AG04449 (cell line): ENCODE measurements at regions of chr5 and their contacts with region 1.

Region 1: GRCh38 chr5:42889311-42889933 is 77.7 kb upstream of the SELENOP start:
- DNase-seq: no peak
- H3K4me3 ChIP-seq: no peak overlapping the region
- CTCF ChIP-seq: peak; percentile 84

Region 2: DNA sequence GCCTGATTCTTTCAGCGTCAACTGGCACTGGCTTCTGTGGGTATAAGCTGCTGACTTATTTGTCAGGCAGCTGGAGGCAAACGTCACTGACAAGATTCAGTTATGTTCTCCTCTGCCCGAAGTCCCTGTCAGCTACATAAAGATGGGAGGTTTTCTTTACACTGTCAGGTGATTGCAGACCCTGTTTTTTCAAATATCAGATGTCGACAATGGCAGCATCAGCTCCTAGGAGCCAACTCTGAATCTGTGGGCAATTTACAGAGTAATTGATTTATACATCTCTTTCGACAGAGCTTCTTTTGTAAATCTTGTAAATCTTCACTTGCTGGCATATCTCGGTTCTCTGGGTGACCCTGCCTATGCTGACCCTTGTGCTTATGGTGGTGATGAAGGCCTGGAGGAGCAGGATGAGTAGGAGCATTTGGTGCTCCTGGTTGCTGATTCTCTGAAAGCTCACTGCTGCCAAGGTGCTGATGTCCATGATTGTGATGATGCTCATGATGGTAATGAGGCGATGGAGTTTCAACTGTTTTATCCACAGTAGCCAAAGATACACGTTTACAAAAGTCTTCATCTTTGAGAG is 88.6 kb before region 1 on chr5:
- CTCF ChIA-PET with region 1: no interaction called
- POLR2A ChIA-PET with region 1: no interaction called
- DNase-seq: no peak
- H3K4me3 ChIP-seq: no peak overlapping the region
- CTCF ChIP-seq: no peak

Region 3: GRCh38 chr5:42876375-42876844 is 13.0 kb before region 1 on chr5:
- CTCF ChIA-PET with region 1: interaction called, 18 read pairs
- POLR2A ChIA-PET with region 1: no interaction called
- DNase-seq: no peak
- H3K4me3 ChIP-seq: no peak overlapping the region
- CTCF ChIP-seq: no peak

Region 4: DNA sequence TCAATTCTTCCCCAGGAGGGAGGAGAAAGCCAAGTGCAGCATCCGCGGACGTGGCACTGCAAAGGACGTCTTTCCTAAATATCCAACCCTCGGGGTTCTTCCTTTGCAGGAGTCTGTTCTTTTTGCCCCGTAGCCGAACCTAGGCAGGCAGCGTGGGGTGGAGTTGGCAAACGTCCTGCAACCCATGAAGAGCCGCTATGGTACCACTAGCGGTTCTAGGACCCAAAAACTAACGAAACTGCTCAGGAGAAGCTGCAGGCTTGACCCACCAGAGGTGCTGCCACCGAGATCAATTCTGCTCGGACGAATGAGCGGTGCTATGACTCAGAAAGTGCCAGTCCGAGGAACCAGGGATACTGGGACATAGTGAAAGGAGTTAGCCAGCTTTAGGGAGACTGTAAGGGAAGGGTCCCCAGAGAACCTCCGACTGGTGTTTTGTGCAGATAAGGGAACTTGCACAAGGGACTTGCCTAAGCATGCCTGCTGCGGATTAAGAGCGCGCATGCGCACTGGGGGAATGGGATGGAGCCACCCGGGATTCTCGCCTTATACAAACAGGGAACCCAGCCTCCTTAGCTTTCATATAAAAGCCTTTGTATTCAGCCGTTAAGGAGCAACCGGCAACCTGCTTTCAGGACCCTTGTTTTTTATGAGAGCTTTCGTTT is 118.0 kb after region 1 on chr5:
- CTCF ChIA-PET with region 1: no interaction called
- POLR2A ChIA-PET with region 1: no interaction called
- DNase-seq: no peak
- H3K4me3 ChIP-seq: peak overlapping the region; percentile 57
- CTCF ChIP-seq: no peak